Activated CD4-positive, alpha-beta T cell treated with anti-CD3 and anti-CD28 coated beads for 36 hours (primary cell): ENCODE measurements at regions of chr4 and their contacts with region 1.

Region 1: GRCh38 chr4:37686373-37687193 is at the start of gene RELL1:
- DNase-seq: peak; percentile 99
- ATAC-seq: peak; percentile 89
- H3K4me3 Mint-ChIP-seq: peak within 1 kb of the TSS; percentile 84
- H3K27ac Mint-ChIP-seq: peak within 1 kb of the TSS; percentile 94
- H3K4me1 Mint-ChIP-seq: peaks cover 35% of the 10 kb centered on the region
- H3K27me3 Mint-ChIP-seq: no peaks in the 10 kb centered on the region
- total RNA-seq, gene RELL1: 8.5 to 9.5 TPM

Region 2: DNA sequence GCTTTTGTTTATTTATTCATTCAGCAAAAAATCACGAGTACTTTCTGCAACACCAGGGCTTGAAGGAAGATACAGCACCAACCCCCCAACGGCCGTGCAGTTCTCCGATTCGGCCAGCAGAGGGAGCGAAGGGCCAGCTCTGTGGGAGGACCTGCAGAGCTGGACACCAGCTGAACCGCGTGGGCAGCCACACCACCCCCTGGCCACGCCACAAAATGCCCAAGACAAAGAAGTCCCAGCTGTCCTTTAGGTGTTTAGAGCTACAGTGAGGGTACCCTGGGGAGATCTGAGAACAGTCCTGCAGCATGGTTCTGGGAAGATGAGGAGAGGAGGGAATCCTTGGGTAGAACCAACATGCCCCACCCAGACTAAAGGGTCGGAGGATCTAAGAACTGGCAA is 83.5 kb before region 1 on chr4:
- CTCF ChIA-PET with region 1: interaction called, 7 read pairs
- POLR2A ChIA-PET with region 1: no interaction called
- intact Hi-C with region 1: loop called in 1 of 2 experiments (anchors 1 kb)
- DNase-seq: peak; percentile 86
- ATAC-seq: peak; percentile 63
- H3K4me3 Mint-ChIP-seq: no peak overlapping the region
- H3K27ac Mint-ChIP-seq: peak overlapping the region; percentile 53
- H3K4me1 Mint-ChIP-seq: peaks cover 4% of the 10 kb centered on the region
- H3K27me3 Mint-ChIP-seq: no peaks in the 10 kb centered on the region

Region 3: DNA sequence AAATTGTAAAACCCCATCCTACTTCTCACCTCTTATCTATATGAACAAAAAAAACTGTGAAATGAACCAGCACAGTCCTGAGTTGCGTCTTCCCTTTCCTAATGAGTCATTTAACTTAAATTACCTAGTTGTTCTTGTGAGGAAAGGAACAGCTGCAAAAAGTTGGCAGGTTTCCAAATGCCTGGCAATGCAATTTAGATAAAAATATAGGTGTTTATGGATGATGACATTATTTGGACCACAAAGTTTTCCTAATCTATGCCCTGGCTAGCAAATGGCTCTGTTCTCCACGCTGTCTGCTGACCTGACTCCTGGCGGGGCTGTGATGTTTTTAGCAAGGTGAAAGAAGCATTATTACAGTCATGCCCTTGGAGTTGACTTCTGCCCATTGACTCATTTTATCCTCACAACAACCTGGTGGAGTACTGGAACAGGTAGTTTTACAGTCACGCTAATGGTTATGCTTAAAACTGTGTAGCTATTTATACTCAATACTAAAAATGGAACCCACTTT is 29.4 kb after region 1 on chr4:
- CTCF ChIA-PET with region 1: interaction called, 3 read pairs
- POLR2A ChIA-PET with region 1: no interaction called
- intact Hi-C with region 1: loop called in 1 of 2 experiments (anchors 1 kb)
- DNase-seq: peak; percentile 70
- ATAC-seq: peak; percentile 87
- H3K4me3 Mint-ChIP-seq: no peak overlapping the region
- H3K27ac Mint-ChIP-seq: peak overlapping the region; percentile 34
- H3K4me1 Mint-ChIP-seq: peaks cover 18% of the 10 kb centered on the region
- H3K27me3 Mint-ChIP-seq: no peaks in the 10 kb centered on the region

Region 4: GRCh38 chr4:37793562-37793961 is 107.0 kb after region 1 on chr4:
- CTCF ChIA-PET with region 1: no interaction called
- POLR2A ChIA-PET with region 1: no interaction called
- intact Hi-C with region 1: no loop called
- DNase-seq: peak; percentile 23
- ATAC-seq: peak; percentile 64
- H3K4me3 Mint-ChIP-seq: no peak overlapping the region
- H3K27ac Mint-ChIP-seq: no peak overlapping the region
- H3K4me1 Mint-ChIP-seq: peaks cover under 1% of the 10 kb centered on the region
- H3K27me3 Mint-ChIP-seq: no peaks in the 10 kb centered on the region

Region 5: DNA sequence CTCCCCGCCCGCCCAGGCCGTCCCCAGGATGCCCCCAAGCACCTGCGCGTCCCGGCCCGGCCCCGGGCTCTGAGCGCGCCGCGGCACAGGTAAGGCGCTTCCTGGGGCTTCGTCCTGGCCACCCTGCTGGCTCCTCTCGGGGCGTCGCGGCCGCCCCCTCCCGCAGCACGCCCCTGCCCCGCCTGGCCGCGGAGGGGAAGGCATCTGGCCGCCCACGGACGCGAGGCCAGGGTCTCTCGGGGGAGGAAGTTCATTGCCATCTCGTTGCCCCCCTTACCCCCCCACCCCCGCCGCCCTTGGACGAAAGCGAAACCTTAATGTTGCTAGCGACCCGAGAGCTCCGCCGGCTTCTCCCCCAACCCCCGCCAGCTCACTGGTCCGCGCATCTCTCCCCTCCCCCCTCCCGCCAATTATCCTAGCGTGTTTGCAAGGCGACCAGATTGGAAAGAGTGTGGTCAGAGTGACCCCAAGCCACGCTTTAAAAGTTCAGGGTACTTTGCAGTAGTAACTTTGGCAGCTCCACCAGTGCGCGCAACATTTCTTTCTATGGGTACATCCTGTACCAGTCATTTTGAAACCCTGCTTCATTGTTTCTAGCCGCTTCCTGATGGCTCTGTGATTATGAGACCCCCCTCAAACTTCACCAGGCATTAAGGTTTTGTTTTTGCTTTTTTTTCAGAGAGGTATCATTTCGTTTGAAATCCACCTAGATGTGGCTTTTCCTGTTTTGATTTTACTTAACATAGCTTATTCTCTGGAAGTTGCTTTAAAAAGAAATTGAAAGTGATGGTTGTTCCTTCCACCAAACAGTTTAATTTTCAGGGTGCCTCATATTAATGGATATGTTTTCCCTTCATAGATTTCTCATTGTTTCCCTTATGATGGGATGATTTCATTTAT is 204.9 kb after region 1 on chr4:
- CTCF ChIA-PET with region 1: no interaction called
- POLR2A ChIA-PET with region 1: no interaction called
- intact Hi-C with region 1: loop called in 1 of 2 experiments (anchors 1 kb)
- DNase-seq: peak; percentile 73
- ATAC-seq: peak; percentile 78
- H3K4me3 Mint-ChIP-seq: peak overlapping the region; percentile 78
- H3K27ac Mint-ChIP-seq: peak overlapping the region; percentile 93
- H3K4me1 Mint-ChIP-seq: peaks cover 35% of the 10 kb centered on the region
- H3K27me3 Mint-ChIP-seq: peaks cover 3% of the 10 kb centered on the region

Region 6: DNA sequence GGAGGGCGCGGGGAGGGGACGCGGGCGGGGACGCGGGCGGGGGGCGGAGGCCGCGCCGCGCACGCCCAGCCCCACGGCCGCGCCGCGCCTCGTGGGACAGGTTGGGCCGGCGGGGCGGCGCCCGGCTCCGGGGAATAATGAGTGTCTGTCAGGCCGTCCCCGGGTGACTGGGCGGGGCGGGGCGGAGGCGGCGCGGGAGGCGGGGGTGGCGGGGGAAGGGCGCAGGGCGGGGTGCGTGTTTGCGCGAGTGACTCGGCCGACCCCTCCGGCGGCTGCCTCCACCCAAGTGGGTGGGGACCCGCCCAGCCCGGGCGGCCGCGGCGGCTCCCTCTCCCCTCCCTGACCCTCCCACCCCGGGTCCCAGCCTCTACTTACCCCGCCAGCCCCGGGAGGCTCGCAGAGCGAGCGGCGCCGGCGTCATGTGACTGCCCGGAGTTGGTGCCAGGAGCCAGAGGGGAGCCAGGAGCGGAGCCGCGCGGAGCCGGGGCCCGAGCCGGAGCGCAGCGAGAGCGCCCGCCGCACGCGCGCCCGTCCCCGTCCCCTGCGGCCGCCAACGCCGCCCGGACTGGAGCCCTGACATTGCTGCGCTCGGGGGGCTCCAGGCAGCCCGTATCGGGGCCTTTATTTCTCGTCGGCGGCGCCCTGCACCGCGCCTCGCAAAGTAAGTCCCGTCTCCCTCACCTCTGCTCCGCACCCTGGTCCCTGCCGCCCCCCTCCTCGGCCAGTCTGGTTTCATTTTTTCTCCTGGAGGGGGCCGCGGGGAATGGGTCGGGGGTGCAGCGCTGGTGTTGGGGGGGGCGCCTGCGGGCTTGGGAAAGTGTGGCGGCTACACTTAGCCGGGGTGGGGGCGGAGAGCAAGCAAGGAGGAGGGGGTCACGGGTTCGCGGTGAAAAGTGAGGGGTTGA is 977.5 kb after region 1 on chr4 and contains the start of gene KLF3:
- CTCF ChIA-PET with region 1: no interaction called
- POLR2A ChIA-PET with region 1: no interaction called
- intact Hi-C with region 1: loop called in 1 of 2 experiments (anchors 5 kb)
- DNase-seq: peak; percentile 84
- ATAC-seq: peak; percentile 62
- H3K4me3 Mint-ChIP-seq: peak within 1 kb of the TSS; percentile 88
- H3K27ac Mint-ChIP-seq: peak within 1 kb of the TSS; percentile 78
- H3K4me1 Mint-ChIP-seq: peaks cover 61% of the 10 kb centered on the region
- H3K27me3 Mint-ChIP-seq: no peaks in the 10 kb centered on the region
- total RNA-seq, gene KLF3: 6.1 to 6.2 TPM

Region 7: GRCh38 chr4:39181905-39182638 is 1495.5 kb after region 1 on chr4 and contains the start of gene WDR19:
- CTCF ChIA-PET with region 1: interaction called, 3 read pairs
- POLR2A ChIA-PET with region 1: no interaction called
- intact Hi-C with region 1: loop called in 1 of 2 experiments (anchors 10 kb)
- DNase-seq: peak; percentile 99
- ATAC-seq: peak; percentile 99
- H3K4me3 Mint-ChIP-seq: no peak within 1 kb of the TSS
- H3K27ac Mint-ChIP-seq: no peak within 1 kb of the TSS
- H3K4me1 Mint-ChIP-seq: peaks cover 8% of the 10 kb centered on the region
- H3K27me3 Mint-ChIP-seq: peaks cover 3% of the 10 kb centered on the region
- total RNA-seq, gene WDR19: 12.1 to 16.2 TPM